ENCODE measurements at regions of chr19 and their contacts with region 1.

Region 1: DNA sequence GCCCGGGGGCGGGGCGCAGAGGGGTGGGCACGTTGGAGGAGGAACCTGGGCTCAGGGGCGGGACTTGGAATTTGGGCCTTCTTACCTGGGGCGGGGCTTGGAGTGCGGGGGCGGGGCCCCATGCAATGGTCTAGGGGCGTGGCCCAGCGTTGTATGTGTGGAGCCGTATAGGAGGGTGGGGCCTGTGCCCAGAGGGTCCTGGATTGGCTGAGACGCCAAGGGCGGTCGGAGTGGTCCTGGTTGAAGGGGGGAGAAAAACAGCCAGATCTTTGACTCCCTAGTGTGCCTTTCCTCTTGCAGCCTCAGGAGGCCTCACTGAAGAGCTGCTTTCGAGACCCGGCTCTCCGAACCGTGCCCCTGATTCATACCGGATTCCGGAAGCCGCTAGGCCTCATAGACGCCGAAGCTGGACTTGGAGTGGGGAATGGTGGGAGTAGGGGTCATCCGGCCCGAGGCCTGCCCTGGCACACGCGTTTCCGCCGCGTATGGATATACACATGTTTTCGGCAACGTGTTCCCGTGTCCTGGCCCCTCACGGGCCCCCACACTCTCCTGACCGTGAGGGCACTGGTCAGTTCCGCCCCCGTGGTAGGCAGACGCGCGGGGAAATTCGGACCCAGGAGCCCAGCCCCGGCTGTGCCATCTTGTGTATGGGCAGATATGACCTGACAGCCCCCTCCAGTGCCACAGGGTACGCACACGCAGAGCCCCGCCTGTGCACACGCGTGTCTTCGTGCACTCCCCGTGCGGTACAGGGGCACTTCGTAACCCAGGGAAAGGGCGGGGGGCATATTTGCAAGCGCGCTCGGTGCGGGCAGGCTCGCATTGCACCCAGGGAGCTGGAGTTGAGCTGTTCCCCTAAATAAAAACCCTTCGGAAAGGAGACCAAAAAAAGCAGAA is 661 bp upstream of the PRR12 start:
- DNase-seq: peak; percentile 96 to 98 (median 98)
- ATAC-seq: peak; percentile 90 to 91
- H3K4me3 ChIP-seq: peak overlapping the region; percentile 98
- H3K27ac ChIP-seq: peak overlapping the region; percentile 89
- H3K4me1 ChIP-seq: peaks cover 5% of the 10 kb centered on the region
- H3K27me3 ChIP-seq: no peaks in the 10 kb centered on the region

Region 2: GRCh38 chr19:49555600-49556411 is 34.5 kb before region 1 on chr19:
- intact Hi-C with region 1: no loop called
- DNase-seq: peak; percentile 68 to 84 (median 80)
- ATAC-seq: peak; percentile 56 to 73
- H3K4me3 ChIP-seq: no peak overlapping the region
- H3K27ac ChIP-seq: no peak overlapping the region
- H3K4me1 ChIP-seq: no peaks in the 10 kb centered on the region
- H3K27me3 ChIP-seq: no peaks in the 10 kb centered on the region

Region 3: DNA sequence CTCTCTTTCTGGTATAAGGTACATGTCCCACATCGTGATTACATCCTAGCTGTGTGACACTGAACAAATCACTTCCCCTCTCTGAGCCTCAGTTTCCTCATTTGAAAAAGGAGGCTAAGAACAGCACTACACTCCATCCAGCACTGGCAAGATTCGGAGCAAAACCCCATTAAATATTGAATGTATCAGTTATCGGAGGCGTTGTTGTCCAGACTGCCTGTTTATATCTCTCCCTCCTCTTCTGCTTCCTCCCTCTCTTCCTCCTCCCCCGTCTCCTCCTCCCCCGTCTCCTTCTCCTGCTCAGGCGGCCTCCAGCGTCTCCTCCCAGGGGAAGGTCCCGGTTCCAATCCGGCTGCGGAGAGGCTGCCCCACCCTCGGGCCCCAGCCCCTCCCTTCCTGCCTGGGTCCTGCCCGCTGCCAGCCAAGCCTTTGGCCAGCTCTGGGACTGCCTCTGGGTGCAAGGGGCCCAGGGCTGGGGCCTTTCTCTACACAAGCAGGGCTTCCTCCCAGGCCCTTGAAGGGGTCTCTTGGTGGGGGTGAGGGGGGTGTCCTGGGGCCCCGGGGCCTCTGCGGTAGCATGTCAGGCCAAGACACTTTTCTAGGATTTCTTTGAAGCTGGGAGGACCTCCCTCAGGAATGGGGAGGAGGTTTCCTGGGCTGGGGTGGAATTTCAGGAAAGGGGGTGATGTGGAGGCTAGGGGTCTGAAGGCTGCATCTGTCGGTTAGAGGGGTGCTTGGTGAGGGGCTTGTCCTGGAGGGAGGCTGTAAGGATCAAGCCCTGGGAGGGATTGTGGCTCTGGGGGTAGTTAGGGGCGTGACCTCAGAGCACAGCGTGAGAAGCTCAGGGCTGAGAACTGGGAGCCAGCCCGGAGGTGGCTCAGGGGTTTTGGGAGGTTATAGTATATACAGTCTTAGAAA is 47.8 kb after region 1 on chr19:
- intact Hi-C with region 1: loop called in 3 of 4 experiments (anchors 5 to 10 kb)
- DNase-seq: peak; percentile 94 to 97 (median 97)
- ATAC-seq: peak; percentile 18
- H3K4me3 ChIP-seq: peak overlapping the region; percentile 73
- H3K27ac ChIP-seq: peak overlapping the region; percentile 91
- H3K4me1 ChIP-seq: peaks cover 6% of the 10 kb centered on the region
- H3K27me3 ChIP-seq: no peaks in the 10 kb centered on the region

Region 4: DNA sequence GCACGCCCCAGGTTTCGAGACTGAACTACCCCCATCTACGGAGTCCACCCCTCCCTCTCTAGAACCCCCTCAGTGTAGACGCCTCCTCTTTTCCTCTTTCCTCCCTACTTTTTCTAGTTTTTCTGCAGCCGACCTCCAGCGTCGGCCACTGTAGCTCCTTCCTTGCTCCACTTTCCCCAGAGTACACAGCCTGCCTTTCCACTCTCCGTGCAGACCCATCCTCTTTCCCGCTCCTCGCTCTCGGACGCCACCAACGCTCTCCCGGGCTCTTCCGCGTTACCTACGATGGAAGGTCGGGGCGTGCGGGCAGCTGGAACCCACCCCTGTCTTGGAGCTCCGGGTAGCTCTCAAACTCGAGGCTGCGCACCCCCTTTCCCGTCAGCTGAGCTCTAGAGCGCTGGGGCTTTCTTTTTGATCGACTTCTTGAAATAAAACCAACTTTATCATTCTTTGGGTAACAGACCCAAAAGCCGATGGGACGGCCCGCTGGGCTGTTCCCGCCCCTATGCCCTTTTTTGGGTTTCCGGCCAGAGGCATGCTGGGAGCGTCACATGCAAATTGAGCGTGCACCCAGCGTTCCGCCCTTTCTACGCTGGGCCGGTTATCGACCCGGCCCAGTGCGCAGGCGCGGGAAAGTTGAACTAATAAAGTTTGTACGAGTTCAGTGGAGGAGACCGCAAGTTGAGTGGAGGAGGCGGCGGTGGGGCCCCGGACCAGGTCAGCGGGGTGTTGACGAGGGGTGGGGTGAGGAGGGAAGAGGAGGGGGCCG is 75.2 kb after region 1 on chr19 and contains the starts of genes BCL2L12 and IRF3:
- intact Hi-C with region 1: loop called in 3 of 4 experiments (anchors 10 kb)
- DNase-seq: peak; percentile 99
- ATAC-seq: peak; percentile 91 to 94
- H3K4me3 ChIP-seq: peak within 1 kb of the TSS; percentile 70
- H3K27ac ChIP-seq: peak within 1 kb of the TSS; percentile 89
- H3K4me1 ChIP-seq: no peaks in the 10 kb centered on the region
- H3K27me3 ChIP-seq: no peaks in the 10 kb centered on the region
- total RNA-seq, gene BCL2L12: 8.6 to 14.0 (median 12.4) TPM
- total RNA-seq, gene IRF3: 34.1 to 58.0 (median 40.7) TPM